ENCODE measurements at regions of chr9 and their contacts with region 1.

Region 1: DNA sequence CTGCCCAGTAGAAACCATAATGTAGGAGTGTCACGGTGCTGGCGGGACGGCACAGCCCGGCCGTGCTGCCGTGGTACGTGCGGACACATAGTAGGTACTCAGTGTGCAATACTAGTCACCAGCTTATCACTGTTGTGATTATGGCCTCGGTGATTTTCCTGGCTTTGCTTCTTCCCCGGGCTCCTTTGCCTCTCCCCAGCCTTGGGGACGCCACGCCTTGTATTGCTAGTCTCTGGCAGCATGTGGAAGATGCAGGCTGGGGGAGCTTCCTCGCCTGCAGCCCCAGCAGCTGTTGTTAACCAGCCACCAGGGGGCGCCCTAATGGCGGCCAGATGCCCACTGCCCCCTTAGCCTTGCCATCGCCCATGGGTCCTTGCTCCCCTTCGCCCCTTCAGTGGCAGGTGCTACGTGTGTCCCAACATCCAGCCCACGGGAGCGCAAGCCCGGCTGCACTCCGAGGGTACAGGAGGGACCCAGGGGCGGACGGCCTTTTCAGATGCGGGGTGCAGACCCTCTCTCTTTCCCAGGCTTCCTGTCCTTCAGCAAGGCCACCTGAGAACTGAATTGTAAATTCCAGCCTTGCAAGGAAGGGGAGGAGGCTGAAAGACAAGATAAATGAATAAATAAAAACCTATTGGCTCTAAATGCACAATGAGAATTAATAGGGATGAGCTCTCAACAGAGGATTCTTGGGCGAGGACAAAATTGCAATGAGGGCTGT is 8.0 kb downstream of the NTNG2 start:
- DNase-seq: peak; percentile 8
- H3K4me3 ChIP-seq: no peak overlapping the region
- H3K27ac ChIP-seq: no peak overlapping the region
- H3K27me3 ChIP-seq: peaks cover 42% of the 10 kb centered on the region
- CTCF ChIP-seq: peak; percentile 82

Region 2: DNA sequence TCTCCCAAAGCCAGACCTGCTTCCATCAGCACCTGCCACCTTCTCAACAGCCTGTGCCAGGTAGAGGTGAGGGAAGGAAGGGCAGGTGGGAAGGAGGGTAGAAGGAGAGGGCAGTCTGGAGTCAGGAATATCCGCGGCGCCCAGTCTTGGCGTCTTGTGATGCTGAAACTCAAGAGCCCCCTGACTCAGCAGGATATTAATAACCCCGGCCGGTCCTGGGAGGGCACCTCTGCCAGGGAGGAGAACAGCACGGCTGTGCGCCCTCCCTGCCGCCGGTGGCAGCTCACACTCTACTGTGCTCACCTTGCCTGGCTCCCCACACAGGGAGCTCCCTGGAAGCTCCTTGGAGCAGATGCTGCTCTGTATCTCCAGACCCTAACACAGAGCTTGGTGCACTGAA is 19.6 kb before region 1 on chr9:
- CTCF ChIA-PET with region 1: interaction called, 12 read pairs
- POLR2A ChIA-PET with region 1: no interaction called
- DNase-seq: no peak
- H3K4me3 ChIP-seq: no peak overlapping the region
- H3K27ac ChIP-seq: no peak overlapping the region
- H3K27me3 ChIP-seq: peaks cover 62% of the 10 kb centered on the region
- CTCF ChIP-seq: no peak

Region 3: DNA sequence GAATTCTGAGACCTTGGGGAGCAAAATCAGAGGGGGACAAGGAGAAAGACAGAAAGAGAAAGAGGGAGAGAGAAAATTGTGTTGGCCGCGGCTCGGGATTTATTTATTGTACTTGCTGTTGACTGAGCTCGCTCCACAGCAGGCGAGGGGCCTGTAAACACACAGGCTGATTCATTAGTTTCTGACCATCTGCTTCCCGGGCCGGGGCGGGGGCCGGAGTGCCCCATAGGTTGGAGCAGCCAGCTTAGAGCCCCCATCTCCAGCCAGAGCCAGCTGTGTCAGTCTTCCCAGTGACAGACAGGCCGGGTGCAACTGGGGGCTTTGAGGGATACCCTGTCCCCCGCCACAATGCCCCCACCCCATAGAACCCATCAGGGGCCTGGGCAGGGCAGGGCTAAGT is 22.9 kb after region 1 on chr9:
- CTCF ChIA-PET with region 1: interaction called, 12 read pairs
- POLR2A ChIA-PET with region 1: no interaction called
- DNase-seq: peak; percentile 6
- H3K4me3 ChIP-seq: no peak overlapping the region
- H3K27ac ChIP-seq: no peak overlapping the region
- H3K27me3 ChIP-seq: peaks cover 21% of the 10 kb centered on the region
- CTCF ChIP-seq: no peak

Region 4: GRCh38 chr9:132234535-132234934 is 64.7 kb after region 1 on chr9:
- CTCF ChIA-PET with region 1: interaction called, 60 read pairs
- POLR2A ChIA-PET with region 1: no interaction called
- DNase-seq: no peak
- H3K4me3 ChIP-seq: no peak overlapping the region
- H3K27ac ChIP-seq: no peak overlapping the region
- H3K27me3 ChIP-seq: peaks cover 59% of the 10 kb centered on the region
- CTCF ChIP-seq: no peak

Region 5: GRCh38 chr9:132240753-132241493 is 71.1 kb after region 1 on chr9:
- CTCF ChIA-PET with region 1: interaction called, 60 read pairs
- POLR2A ChIA-PET with region 1: no interaction called
- DNase-seq: peak; percentile 65
- H3K4me3 ChIP-seq: peak overlapping the region; percentile 62
- H3K27ac ChIP-seq: no peak overlapping the region
- H3K27me3 ChIP-seq: peaks cover 54% of the 10 kb centered on the region
- CTCF ChIP-seq: no peak

Region 6: DNA sequence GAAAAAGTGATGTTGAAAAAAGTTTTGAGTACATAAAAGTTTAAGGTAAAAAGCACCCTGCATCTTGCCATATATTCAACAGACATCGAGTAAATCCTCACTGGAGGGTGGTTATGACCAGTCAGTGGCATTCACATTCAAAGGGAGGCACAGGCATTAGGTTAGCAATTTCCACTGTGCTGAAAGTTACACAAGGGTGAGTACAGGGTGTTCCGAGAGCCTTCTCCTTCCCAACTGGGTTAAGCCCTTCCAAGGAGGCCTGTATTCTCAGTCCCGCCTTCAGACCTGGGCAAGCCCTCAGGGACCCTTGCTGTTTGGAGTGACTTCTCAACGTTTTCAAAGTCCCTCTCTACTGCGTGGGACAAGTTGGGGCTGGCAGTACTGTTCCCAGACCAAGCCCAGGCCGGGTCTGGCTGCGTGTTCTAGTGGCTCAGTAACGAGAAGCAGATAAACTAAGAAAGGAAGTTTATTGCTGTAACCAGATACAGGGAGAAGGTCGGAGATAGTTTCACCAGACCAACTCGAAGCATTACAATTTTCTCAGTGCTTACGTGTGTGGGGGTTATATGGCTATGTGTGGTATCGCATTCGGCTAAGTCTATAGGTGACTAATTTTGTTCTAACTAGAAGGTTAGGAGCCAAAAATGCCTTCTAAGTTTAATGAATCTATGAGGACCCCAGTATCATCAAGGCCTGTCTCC is 197.9 kb after region 1 on chr9:
- CTCF ChIA-PET with region 1: no interaction called
- POLR2A ChIA-PET with region 1: no interaction called
- DNase-seq: no peak
- H3K4me3 ChIP-seq: no peak overlapping the region
- H3K27ac ChIP-seq: no peak overlapping the region
- H3K27me3 ChIP-seq: peaks cover 8% of the 10 kb centered on the region
- CTCF ChIP-seq: no peak

Measured in AG04450 (cell line).